Activated B cell treated with CpG ODN at 0.5 μM for 24 hours (primary cell): ENCODE measurements at regions of chr3 and their contacts with region 1.

Region 1: GRCh38 chr3:195850857-195851543 is 39.3 kb upstream of the MUC4 start:
- DNase-seq: peak; percentile 61
- ATAC-seq: peak; percentile 100
- H3K4me3 Mint-ChIP-seq: peak overlapping the region; percentile 35
- H3K27ac Mint-ChIP-seq: no peak overlapping the region
- H3K4me1 Mint-ChIP-seq: peaks cover 10% of the 10 kb centered on the region
- H3K27me3 Mint-ChIP-seq: peaks cover 11% of the 10 kb centered on the region
- CTCF ChIP-seq: peak; percentile 100

Region 2: DNA sequence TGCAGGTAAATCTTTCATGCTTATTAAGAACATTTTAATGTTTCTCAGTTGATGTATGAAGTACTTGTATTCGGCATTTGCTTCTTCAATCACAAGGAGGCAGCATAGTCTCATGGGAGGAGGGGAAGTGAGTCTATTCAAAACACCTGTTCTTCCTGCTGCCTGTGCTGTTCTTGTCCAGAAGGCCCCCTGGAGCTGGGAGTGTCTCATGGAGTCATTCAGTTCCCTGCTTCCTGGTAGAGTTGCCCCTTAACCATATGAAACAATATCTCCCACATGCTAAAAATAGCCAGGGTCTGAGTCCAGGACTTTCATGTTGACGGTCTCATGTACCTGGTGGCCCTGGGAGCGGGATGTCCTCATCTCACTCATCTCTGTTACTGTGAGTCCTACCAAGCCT is 292.4 kb before region 1 on chr3:
- CTCF ChIA-PET with region 1: no interaction called
- POLR2A ChIA-PET with region 1: no interaction called
- intact Hi-C with region 1: loop called (anchors 1 kb)
- DNase-seq: no peak
- ATAC-seq: peak; percentile 54
- H3K4me3 Mint-ChIP-seq: no peak overlapping the region
- H3K27ac Mint-ChIP-seq: no peak overlapping the region
- H3K4me1 Mint-ChIP-seq: peaks cover 11% of the 10 kb centered on the region
- H3K27me3 Mint-ChIP-seq: no peaks in the 10 kb centered on the region
- CTCF ChIP-seq: no peak

Region 3: DNA sequence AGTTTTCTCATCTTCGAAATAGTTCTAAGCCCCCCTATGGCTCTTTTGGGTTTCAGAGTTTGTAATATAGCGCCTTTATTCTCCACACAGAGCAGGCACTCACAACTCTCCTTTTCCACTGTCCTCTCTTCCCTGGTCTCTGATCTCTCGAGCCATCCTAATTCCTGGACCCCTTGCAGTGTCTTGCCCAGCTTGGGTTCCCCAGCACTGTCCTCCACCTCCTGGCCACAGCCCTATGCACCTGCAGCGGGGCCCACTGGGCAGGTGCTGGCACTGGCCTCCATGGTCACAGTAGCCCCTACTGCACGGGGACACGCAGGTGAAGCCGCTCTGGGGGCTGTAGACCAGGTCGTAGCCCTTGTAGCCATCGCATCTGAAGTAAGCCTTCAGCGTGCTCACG is 102.3 kb before region 1 on chr3:
- CTCF ChIA-PET with region 1: no interaction called
- POLR2A ChIA-PET with region 1: no interaction called
- intact Hi-C with region 1: loop called (anchors 2 kb)
- DNase-seq: no peak
- ATAC-seq: no peak
- H3K4me3 Mint-ChIP-seq: no peak overlapping the region
- H3K27ac Mint-ChIP-seq: no peak overlapping the region
- H3K4me1 Mint-ChIP-seq: peaks cover 13% of the 10 kb centered on the region
- H3K27me3 Mint-ChIP-seq: peaks cover 16% of the 10 kb centered on the region
- CTCF ChIP-seq: no peak

Region 4: DNA sequence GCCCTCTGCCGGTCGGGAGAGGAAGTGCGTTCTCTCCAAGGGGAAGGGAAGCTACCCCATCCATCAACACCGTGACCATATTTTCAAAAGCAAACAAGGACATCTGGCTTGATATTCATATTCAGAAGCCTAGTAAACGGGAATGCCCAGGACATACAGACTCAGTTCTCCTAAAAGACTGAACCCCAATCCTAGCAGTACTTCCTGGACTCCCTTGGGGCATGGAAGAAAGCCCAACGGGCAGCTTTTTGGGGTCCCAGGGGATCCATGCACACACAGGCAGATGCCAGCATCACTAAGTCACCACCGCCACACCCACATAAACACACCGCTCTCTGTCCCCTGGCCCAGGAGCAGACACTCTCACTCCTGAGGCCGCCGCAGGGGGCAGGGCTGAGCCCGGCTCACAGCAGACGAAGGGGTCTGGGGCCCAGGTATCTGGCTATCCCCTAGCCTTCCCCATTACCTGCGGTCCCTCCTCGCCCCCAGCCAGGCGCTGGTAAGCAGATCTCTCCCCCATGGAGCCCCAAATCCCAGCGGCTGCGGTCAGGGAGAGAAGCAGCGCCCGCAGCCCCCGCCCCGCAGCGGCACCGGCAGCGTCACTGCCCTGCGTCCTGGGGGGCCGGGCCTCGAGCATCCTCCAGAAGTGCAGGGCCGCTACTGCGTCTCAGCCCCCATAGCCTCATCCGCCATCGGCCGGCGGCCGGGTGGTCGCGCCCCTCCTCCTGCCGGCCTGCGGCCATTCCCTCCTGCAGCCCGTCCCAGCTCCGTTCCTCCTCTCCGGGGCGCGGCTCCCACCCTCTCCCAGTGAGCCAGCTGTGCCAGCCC is 44.0 kb after region 1 on chr3:
- CTCF ChIA-PET with region 1: interaction called, 11 read pairs
- POLR2A ChIA-PET with region 1: no interaction called
- intact Hi-C with region 1: no loop called
- DNase-seq: peak; percentile 72
- ATAC-seq: peak; percentile 72
- H3K4me3 Mint-ChIP-seq: peak overlapping the region; percentile 88
- H3K27ac Mint-ChIP-seq: peak overlapping the region; percentile 88
- H3K4me1 Mint-ChIP-seq: peaks cover 57% of the 10 kb centered on the region
- H3K27me3 Mint-ChIP-seq: no peaks in the 10 kb centered on the region
- CTCF ChIP-seq: peak; percentile 60

Region 5: GRCh38 chr3:195999896-196000295 is 148.9 kb after region 1 on chr3:
- CTCF ChIA-PET with region 1: no interaction called
- POLR2A ChIA-PET with region 1: no interaction called
- intact Hi-C with region 1: loop called (anchors 10 kb)
- DNase-seq: no peak
- ATAC-seq: no peak
- H3K4me3 Mint-ChIP-seq: no peak overlapping the region
- H3K27ac Mint-ChIP-seq: no peak overlapping the region
- H3K4me1 Mint-ChIP-seq: no peaks in the 10 kb centered on the region
- H3K27me3 Mint-ChIP-seq: peaks cover 31% of the 10 kb centered on the region
- CTCF ChIP-seq: no peak

Region 6: GRCh38 chr3:196047391-196048030 is 196.5 kb after region 1 on chr3:
- CTCF ChIA-PET with region 1: no interaction called
- POLR2A ChIA-PET with region 1: no interaction called
- intact Hi-C with region 1: no loop called
- DNase-seq: no peak
- ATAC-seq: no peak
- H3K4me3 Mint-ChIP-seq: no peak overlapping the region
- H3K27ac Mint-ChIP-seq: no peak overlapping the region
- H3K4me1 Mint-ChIP-seq: no peaks in the 10 kb centered on the region
- H3K27me3 Mint-ChIP-seq: no peaks in the 10 kb centered on the region
- CTCF ChIP-seq: no peak